Calu3 (cell line): ENCODE measurements at regions of chr6 and their contacts with region 1.

Region 1: DNA sequence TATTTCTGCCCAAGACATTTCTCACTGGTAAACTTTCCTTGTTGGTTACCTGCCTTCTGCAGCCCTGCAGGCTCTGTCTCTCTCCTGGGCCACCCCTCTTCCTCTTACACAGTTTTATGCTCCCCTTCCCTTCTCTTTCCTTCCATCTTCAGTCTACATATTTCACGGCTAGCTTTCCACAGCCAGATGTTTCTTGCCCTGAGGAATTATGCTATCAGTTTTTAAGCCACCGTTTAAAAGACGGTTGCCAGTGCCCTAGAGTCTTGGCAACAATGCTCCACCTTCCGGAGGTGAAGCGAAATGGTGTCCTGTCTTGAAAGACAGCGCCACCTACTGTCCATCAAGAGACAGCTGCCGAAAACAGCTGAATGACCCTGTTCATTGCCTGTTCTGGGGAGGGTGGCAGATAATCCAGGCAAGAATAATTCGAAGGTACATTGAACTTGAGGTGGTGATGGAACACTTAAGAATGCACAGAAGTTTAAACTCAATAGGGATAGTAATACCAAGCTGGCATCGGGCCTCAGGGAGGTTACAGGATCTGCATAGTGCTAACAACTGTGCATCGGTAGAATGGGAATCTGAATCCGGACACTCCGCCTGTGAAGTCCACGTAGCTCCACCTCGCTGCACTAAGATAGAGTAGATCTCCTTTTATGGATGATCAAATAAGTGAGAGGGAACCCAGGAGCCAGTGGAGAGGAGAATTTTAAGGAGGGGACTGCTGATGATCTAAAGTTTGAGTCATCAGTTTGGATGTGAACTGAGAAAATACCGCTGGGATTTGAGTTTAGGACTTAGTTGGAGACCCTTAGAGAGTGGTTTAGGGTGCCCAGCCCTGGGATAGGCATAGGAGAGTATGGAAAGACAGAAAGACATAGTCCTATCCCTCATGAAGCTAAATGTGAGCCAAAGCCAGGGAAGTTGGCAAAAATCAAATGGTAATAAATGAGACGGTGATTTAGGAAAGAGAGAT is 4.8 kb upstream of the TRIM40 start:
- DNase-seq: peak; percentile 79
- H3K4me3 Mint-ChIP-seq: peak overlapping the region; percentile 33
- H3K27ac Mint-ChIP-seq: peak overlapping the region; percentile 46
- H3K4me1 Mint-ChIP-seq: peaks cover 47% of the 10 kb centered on the region
- H3K27me3 Mint-ChIP-seq: no peaks in the 10 kb centered on the region
- CTCF ChIP-seq: peak; percentile 97

Region 2: GRCh38 chr6:30053682-30054081 is 77.5 kb before region 1 on chr6:
- CTCF ChIA-PET with region 1: no interaction called
- intact Hi-C with region 1: no loop called
- DNase-seq: no peak
- H3K4me3 Mint-ChIP-seq: no peak overlapping the region
- H3K27ac Mint-ChIP-seq: no peak overlapping the region
- H3K4me1 Mint-ChIP-seq: no peaks in the 10 kb centered on the region
- H3K27me3 Mint-ChIP-seq: no peaks in the 10 kb centered on the region
- CTCF ChIP-seq: no peak

Region 3: GRCh38 chr6:30113003-30113759 is 18.0 kb before region 1 on chr6 and contains the start of gene TRIM31:
- CTCF ChIA-PET with region 1: interaction called, 31 read pairs
- intact Hi-C with region 1: loop called (anchors 1 kb)
- DNase-seq: peak; percentile 77
- H3K4me3 Mint-ChIP-seq: peak within 1 kb of the TSS; percentile 70
- H3K27ac Mint-ChIP-seq: peak within 1 kb of the TSS; percentile 73
- H3K4me1 Mint-ChIP-seq: peaks cover 27% of the 10 kb centered on the region
- H3K27me3 Mint-ChIP-seq: no peaks in the 10 kb centered on the region
- CTCF ChIP-seq: no peak
- total RNA-seq, gene TRIM31: 161 and 181 TPM in 2 replicates